ENCODE measurements at regions of chr6 and their contacts with region 1.

Region 1: GRCh38 chr6:32825966-32826365 is 9.2 kb upstream of the HLA-DOB start:
- DNase-seq: no peak
- H3K4me3 ChIP-seq: no peak overlapping the region
- H3K27ac ChIP-seq: peak overlapping the region; percentile 28
- H3K4me1 ChIP-seq: no peaks in the 10 kb centered on the region
- H3K27me3 ChIP-seq: no peaks in the 10 kb centered on the region
- CTCF ChIP-seq: peak; percentile 62

Region 2: DNA sequence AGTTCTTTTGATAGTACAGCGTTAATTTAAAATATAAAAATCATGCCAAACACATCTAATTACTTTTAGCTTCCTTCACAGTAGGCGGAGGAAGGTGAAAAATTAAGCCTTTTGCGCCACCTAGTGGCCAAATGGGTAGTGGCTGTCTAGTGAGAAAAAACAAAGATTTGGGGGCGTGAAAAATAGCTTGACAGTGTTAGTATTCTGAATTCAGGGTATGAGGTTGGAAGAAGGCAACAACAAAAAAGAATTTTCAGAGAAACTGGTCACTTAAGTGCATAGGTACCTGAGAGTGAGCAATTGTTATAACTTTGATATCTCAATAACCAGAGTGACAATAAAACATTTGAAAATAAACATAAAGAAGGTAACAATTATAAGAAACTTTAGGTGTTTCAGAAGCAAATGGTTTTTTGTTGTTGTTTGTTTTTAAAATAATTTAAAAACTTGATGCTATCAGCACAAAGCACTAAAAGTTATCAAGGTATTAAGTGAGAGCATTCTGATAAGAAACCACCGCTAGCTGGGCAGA is 42.4 kb after region 1 on chr6:
- intact Hi-C with region 1: loop called (anchors 5 kb)
- DNase-seq: peak; percentile 68
- H3K4me3 ChIP-seq: no peak overlapping the region
- H3K27ac ChIP-seq: no peak overlapping the region
- H3K4me1 ChIP-seq: peaks cover 4% of the 10 kb centered on the region
- H3K27me3 ChIP-seq: no peaks in the 10 kb centered on the region
- CTCF ChIP-seq: peak; percentile 96

Region 3: DNA sequence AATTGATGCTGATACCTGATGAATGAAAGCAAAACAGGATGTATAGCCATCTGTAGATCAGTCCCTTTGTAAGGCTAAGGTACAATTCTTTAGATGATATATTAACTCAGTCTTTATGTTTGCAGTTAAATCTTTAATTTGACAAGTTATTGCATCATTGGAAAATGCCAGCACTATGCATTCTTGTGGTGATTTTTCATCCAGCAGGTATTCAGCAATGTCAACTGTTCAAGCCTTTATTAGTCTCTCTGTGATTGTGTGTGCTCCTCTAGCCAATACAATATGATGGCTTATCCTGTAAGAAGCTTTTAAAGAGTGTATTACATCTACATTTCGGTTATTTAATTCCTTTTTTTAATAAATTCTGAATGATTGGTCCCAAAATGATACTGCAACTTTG is 80.6 kb after region 1 on chr6:
- intact Hi-C with region 1: no loop called
- DNase-seq: no peak
- H3K4me3 ChIP-seq: no peak overlapping the region
- H3K27ac ChIP-seq: no peak overlapping the region
- H3K4me1 ChIP-seq: no peaks in the 10 kb centered on the region
- H3K27me3 ChIP-seq: peaks cover 5% of the 10 kb centered on the region
- CTCF ChIP-seq: no peak

Measured in left ventricle myocardium inferior (tissue), 1 donor.